PC-9 (cell line): ENCODE measurements at regions of chr9 and their contacts with region 1.

Region 1: DNA sequence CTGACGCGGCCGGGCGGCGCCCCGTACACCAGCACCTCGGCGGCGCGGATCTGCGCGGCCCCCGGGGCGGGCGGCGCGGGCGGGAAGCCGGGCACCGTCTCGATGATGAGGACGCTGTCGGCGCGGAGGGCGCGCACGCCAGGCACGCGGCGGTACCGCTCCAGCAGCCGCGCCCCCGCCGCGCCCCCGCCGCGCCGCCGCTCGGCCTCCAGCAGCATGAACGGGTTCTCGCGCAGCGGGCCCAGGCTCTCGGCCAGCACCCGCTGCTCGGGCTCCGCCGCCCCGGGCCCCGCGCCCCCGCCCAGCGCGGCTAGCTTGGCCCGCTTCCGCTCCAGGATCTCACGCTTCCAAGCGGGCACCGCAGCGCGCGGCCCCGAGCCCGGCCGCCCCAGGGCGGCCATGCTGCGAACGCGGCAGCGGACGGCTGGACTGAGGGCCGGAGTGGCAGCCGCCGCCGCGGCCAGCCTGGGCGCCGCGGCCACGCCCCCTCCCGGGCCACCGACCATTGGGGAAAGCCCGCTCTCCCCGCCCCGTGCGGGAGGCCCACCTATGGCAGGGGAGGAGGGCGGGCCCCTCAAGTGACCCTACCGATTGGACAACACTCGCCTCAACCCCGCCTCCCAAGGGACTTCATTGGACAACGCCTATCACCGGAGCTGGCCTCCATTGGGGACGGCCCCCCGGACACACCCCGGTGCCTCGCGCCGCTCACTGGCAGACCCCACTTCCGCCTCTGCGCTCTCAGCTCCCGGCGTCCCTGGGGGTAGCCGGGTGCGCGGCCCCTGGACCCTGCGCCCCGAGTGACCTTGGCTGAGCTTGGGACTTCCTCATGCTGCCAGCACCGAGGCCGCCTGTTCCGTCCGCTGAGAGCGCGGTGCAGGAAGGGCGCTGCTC is at the start of gene TPRN:
- DNase-seq: peak; percentile 97 to 100
- H3K4me3 ChIP-seq: peak within 1 kb of the TSS; percentile 81
- H3K27ac ChIP-seq: no peak within 1 kb of the TSS
- H3K4me1 ChIP-seq: peaks cover 61% of the 10 kb centered on the region
- H3K27me3 ChIP-seq: no peaks in the 10 kb centered on the region
- CTCF ChIP-seq: no peak
- total RNA-seq, gene TPRN: 61.0 and 61.8 TPM in 2 replicates

Region 2: DNA sequence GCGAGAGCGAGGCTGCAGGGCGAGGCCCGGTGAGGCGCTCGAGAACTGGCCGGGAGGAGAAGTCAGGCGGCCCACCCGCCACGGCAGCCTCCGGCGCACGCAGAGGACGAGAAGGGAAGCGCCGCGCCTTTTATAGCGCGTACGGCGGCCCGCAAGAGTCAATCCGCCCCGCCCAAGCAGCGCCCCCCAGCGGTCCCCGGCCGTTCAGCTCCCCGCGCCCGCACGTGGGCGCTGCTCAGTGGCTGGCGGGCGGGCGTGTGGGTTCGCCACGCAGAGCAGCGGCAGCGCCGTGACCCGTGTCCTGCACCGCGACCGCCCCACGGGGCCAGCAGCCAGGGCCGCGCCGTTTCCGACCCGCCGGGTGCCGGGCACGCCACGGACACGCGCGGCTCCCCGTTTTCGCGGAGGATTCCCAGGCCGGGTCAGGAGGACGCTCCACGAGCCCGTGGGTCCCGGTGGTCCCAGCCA is 472.4 kb before region 1 on chr9:
- CTCF ChIA-PET with region 1: no interaction called
- POLR2A ChIA-PET with region 1: interaction called, 12 read pairs
- intact Hi-C with region 1: no loop called
- DNase-seq: peak; percentile 47 to 90
- H3K4me3 ChIP-seq: peak overlapping the region; percentile 99
- H3K27ac ChIP-seq: peak overlapping the region; percentile 17; the same call in 1 of the 2 replicates
- H3K4me1 ChIP-seq: peaks cover 27% of the 10 kb centered on the region
- H3K27me3 ChIP-seq: no peaks in the 10 kb centered on the region
- CTCF ChIP-seq: peak; percentile 78

Region 3: DNA sequence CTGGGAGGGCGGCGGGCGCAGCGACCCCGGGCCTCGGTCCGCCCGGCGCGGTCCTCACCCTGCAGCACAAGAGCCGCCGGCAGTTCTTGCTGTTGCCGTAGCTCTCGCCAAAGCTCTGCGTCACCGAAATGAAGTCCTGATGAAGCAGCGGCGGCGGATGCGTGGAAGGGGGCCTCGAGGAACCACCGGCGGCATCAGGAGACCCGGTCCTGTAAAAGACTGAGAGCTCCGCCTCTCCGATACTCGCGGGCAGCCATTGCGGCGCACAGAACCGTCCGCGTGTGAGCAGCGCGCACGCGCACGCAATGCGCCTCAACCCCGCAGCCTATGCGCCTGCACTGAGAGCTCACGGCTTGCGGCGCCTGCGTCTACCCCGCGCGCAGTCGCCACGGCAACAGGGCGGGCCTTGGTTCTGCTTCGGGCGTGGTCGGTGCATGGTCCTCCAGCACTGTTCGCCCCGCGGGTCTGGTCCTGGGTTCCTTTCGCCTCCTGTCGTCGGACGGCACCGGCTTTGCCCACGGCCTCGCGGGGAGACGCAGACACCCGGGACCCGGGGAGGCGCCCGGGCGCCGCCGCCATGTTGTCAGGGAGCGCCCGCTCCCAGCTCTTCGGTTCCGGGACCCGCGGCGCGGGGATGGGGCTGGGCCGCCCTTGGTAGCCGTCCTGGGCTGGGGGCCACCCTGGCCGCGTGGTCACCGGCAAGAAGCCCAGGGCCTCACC is 70.9 kb before region 1 on chr9:
- CTCF ChIA-PET with region 1: interaction called, 7 read pairs
- POLR2A ChIA-PET with region 1: interaction called, 6 read pairs
- intact Hi-C with region 1: loop called (anchors 2 kb)
- DNase-seq: peak; percentile 76 to 93
- H3K4me3 ChIP-seq: peak overlapping the region; percentile 86
- H3K27ac ChIP-seq: peak overlapping the region; percentile 54
- H3K4me1 ChIP-seq: peaks cover 28% of the 10 kb centered on the region
- H3K27me3 ChIP-seq: no peaks in the 10 kb centered on the region
- CTCF ChIP-seq: no peak

Region 4: GRCh38 chr9:137178201-137178938 is 22.2 kb before region 1 on chr9:
- CTCF ChIA-PET with region 1: no interaction called
- POLR2A ChIA-PET with region 1: no interaction called
- intact Hi-C with region 1: no loop called
- DNase-seq: peak in 1 of 2 experiments; percentile 35
- H3K4me3 ChIP-seq: no peak overlapping the region
- H3K27ac ChIP-seq: no peak overlapping the region
- H3K4me1 ChIP-seq: peaks cover 4% of the 10 kb centered on the region; the same call in 1 of the 2 replicates
- H3K27me3 ChIP-seq: no peaks in the 10 kb centered on the region
- CTCF ChIP-seq: no peak

Region 5: DNA sequence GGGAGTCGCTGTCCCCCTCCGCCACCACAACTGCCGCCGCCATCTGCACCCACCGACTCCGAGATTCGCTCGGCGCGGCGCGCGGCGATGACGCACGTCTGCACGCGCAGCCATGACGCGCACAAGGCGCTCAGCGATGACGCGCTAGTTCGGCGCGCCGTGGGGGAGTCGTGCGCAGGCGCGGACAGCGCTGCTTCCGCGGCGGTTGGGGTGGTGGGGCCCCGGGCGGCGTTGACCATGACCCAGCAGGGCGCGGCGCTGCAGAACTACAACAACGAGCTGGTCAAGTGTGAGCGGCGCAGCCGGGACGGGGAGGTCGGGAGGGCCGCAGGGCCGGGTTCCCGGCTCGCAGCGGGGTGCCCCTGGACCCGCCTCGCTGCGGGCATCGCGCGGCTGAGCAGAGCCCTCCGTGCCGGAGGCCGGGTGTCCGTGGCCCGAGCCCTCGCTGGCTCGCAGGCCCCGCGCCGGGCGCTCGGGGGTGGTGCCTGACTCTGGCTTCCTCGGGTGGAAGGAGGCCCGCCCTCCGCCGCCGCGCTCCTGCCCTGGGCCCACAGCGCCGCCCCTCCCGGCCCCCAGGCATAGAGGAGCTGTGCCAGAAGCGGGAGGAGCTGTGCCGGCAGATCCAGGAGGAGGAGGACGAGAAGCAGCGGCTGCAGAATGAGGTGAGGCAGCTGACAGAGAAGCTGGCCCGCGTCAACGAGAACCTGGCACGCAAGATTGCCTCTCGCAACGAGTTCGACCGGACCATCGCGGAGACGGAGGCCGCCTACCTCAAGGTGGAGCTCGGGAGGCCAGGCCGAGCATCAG is 11.9 kb before region 1 on chr9 and contains the starts of genes ANAPC2 and SSNA1:
- CTCF ChIA-PET with region 1: interaction called, 9 read pairs
- POLR2A ChIA-PET with region 1: interaction called, 14 read pairs
- intact Hi-C with region 1: loop called (anchors 1 kb)
- DNase-seq: peak; percentile 81 to 98
- H3K4me3 ChIP-seq: peak within 1 kb of the TSS; percentile 97
- H3K27ac ChIP-seq: peak within 1 kb of the TSS; percentile 74
- H3K4me1 ChIP-seq: peaks cover 33% of the 10 kb centered on the region
- H3K27me3 ChIP-seq: no peaks in the 10 kb centered on the region
- CTCF ChIP-seq: peak; percentile 44; the same call in 1 of the 2 replicates
- total RNA-seq, gene ANAPC2: 92.1 and 95.4 TPM in 2 replicates
- total RNA-seq, gene SSNA1: 98.7 and 109 TPM in 2 replicates

Region 6: GRCh38 chr9:137240861-137241489 is 40.4 kb after region 1 on chr9 and contains the start of gene TUBB4B:
- CTCF ChIA-PET with region 1: interaction called, 6 read pairs
- POLR2A ChIA-PET with region 1: interaction called, 15 read pairs
- intact Hi-C with region 1: no loop called
- DNase-seq: peak; percentile 98 to 100
- H3K4me3 ChIP-seq: peak within 1 kb of the TSS; percentile 97
- H3K27ac ChIP-seq: peak within 1 kb of the TSS; percentile 82
- H3K4me1 ChIP-seq: peaks cover 39% of the 10 kb centered on the region
- H3K27me3 ChIP-seq: no peaks in the 10 kb centered on the region
- CTCF ChIP-seq: no peak
- total RNA-seq, gene TUBB4B: 441 and 494 TPM in 2 replicates

Region 7: DNA sequence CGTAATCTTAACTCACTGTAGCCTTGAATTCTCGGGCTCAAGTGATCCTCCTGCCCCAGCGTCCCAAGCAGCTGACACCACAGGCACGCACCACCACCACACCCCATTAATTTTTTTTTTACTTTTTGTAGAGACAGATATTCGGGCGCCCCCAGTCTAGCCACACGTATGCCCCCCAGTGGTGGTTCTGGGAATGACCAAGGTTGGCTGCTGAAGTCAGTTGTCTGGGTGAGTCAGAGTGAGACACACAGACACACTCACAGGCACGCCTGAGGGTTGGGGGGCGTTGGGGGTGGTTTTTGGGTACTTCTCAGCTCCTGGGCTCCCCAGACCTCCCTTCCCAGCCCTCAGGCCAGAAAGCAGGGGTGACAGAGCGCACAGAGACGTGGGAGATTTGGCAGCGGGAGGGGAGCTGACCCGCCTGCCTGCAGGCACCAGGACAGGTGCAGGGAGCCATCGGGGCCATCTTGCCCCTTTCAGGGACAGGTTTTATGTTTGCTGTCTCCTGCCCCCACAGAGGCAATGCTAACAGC is 244.8 kb after region 1 on chr9:
- CTCF ChIA-PET with region 1: no interaction called
- POLR2A ChIA-PET with region 1: interaction called, 20 read pairs
- intact Hi-C with region 1: no loop called
- DNase-seq: peak; percentile 76 to 93
- H3K4me3 ChIP-seq: no peak overlapping the region
- H3K27ac ChIP-seq: no peak overlapping the region
- H3K4me1 ChIP-seq: peaks cover 18% of the 10 kb centered on the region
- H3K27me3 ChIP-seq: no peaks in the 10 kb centered on the region
- CTCF ChIP-seq: peak; percentile 93